Cardiac septum (tissue), 1 donor: ENCODE measurements at regions of chr10 and their contacts with region 1.

Region 1: DNA sequence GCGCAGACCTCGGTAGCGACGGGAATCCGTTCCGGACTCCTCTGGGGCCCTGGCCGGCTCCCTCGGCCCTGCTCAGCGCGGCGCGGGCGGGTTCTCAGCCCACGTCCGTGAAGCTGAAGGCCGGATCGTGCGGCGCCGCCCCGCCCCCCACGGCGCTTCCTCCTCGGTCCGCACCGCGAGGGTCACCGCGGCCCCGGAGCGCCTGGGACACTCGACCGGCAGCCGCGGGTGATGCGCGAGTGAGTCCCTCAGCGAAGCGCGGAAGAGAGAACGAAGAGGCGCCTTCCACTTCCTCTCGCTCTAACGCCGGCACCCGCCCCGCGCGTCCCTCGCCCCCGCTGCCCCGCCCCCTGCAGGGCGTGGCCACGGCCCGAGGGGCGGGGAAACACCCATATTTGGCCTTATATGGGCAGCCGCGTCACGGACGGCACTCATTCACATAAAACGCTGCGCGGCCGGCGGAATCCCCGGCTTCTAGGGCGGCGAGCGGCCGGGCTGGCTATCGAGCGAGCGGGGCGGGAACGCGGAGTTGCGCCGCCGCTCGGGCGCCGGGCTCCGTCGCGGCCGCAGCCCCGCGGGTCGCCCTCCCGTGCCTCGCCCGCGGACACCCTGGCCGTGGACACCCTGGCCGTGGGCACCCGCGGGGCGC is at the start of gene DUSP5:
- DNase-seq: peak; percentile 99
- total RNA-seq, gene DUSP5: 29.4 TPM

Region 2: DNA sequence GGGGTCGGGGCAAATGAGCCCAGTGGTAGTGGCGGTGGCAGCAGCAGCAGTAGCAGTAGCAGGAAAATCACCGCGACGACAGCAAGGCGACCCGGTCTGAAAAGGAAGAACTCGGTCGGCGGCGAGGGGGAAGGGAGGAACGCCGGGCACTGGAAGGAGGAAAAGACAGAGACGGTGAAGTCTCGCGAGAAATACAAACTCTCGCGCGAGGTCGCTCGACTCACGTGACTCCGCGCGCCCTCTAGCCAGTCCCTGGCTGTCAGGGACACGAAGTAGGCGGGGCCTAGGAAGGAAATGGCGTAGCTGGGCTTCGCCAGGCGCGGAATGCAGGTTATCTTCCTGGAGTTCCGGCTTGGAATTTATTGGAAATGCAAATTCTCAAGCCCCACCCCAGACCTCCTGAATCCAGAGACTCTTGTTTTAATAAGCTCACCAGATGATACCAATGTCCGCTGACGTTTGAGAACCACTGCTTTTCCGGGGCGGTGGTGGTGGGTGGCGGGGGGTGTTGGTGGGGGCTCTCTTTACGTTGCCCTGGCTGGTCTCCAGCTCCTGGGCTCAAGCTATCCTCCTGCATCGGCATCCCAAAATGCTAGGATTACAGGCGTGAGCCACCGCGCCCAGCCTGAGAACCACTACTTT is 192.7 kb before region 1 on chr10 and contains the start of gene SMNDC1:
- intact Hi-C with region 1: loop called (anchors 2 kb)
- DNase-seq: peak; percentile 99
- total RNA-seq, gene SMNDC1: 25.8 TPM

Region 3: GRCh38 chr10:110446954-110447608 is 50.5 kb before region 1 on chr10:
- intact Hi-C with region 1: loop called (anchors 2 kb)
- DNase-seq: peak; percentile 74

Region 4: GRCh38 chr10:110508806-110509544 is 11.4 kb after region 1 on chr10:
- intact Hi-C with region 1: loop called (anchors 1 kb)
- DNase-seq: no peak

Region 5: DNA sequence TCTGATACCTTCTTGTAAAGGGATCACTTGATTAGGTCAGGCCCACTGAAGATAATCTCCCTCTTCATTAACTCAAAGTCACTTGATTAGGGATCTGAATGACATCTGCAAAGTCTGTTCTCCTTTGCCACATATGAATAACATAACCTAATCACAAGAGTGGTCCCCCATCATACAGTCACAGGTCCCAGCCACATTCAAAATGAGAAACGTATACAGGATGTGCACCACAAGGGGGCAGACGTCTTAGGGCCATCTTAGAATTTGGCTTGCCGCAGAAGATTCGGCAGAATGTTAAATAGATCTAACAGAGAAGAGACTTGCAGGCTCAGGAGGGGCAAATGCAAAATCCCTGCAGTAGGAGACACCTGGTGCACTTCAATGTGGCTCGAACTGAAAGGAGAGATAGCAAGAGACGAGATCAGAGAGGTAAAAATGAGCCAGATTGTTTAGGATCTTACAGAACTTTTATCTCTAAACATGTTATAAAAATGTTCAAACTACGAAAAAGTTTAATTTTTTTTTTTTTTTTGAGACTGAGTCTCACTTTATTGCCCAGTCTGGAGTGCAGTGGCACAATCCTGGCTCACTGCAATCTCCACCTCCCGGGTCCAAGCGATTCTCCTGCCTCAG is 59.5 kb after region 1 on chr10:
- intact Hi-C with region 1: no loop called
- DNase-seq: no peak

Region 6: DNA sequence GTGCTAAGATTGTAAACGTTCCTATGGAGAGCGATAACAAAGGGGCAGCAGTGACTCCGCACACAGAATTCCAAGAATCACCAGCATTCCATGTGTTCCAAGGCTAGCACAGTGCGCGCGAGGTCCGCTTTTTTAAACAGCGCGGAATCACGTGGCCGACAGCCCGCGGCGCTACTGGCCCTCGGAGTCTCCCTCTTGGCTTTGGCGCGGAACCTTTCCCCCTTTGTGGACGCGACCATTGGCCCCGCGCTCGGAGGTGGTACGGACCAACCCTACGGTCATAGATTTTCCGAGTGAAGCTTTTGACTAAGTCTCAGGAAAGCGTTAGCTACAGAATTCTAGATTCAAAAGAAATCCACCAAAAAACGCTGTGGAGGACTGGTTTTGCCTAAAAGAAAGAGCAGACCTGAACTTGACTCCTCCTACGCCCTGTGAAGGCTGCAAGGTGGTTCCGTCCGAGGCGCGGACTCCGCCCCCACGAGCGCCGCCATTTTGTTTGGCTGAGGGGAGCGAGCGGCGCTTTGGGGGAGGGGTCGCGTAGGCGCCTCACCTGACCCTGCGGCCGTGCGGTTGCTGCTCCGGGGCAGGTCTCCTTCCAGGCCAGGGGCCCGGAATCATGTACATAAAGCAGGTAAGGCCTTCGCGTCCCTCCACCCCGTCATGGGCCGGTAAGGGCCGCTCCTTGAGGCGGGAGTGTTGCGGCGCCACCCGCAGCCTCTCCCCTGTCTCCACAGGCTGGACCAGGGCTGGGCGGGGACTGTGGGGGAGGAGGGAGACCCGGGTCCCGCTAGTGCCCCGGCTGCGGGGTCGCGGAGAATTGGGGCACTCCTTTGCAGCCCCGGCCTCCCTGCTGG is 69.9 kb after region 1 on chr10 and contains the start of gene SMC3:
- intact Hi-C with region 1: loop called (anchors 5 kb)
- DNase-seq: peak; percentile 96
- total RNA-seq, gene SMC3: 21.3 TPM